A673 (cell line): ENCODE measurements at regions of chr20 and their contacts with region 1.

Region 1: DNA sequence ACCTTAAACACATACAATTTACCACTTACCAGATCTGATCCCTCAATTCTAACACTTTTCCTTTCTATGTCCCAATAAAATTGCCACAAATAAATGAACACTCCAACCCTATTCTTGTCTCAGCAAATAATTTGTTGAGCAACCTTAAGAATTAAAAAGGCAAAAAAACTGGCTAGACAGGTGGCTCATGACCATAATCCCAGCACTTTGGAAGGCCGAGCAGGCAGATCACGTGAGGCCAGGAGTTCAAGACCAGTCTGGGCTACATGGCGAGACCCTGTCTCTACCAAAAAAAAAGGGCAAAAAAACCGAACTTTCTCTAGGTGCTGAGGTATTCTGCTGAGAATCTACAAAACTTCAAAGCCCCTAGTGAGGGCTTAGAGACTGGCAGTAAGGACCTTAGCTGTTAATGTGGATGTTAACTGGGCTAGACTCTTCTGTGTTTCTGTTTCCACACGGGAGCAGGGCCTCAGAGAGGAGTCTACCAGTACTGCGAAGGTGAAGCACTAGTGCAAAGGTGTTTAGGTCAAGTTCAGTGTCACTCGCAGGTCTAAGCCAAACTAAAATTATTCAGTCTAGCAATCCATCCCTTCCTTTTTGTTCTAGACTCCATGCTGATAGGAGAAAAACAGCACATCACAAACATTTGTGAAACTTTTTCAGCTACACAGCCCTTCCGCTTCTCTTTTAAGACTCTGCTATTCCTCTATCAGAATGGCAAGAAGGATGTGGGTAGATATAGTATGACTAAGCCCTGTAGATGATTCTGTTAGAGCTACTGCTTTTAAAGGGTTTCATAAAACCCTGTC is 2.6 kb downstream of the FASTKD5 start:
- DNase-seq: no peak
- H3K4me3 ChIP-seq: no peak overlapping the region
- H3K27ac ChIP-seq: no peak overlapping the region
- H3K4me1 ChIP-seq: no peaks in the 10 kb centered on the region
- H3K27me3 ChIP-seq: no peaks in the 10 kb centered on the region
- CTCF ChIP-seq: no peak

Region 2: DNA sequence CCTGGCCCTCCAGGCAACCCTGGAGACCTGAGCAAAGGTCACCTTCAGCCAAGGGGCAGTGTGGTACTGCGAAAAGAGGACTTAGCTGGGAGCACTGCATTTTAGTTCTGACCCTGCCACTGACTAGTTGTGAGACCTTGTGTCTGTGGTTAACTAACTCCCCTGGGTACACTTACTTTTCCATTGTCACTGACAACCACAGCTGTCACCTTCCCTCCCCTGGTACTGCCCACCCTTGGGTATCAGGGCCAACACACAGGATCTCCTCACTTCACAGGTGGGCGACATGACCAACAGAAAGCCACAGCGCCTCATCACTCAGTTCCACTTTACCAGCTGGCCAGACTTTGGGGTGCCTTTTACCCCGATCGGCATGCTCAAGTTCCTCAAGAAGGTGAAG is 135.2 kb before region 1 on chr20:
- CTCF ChIA-PET with region 1: no interaction called
- POLR2A ChIA-PET with region 1: no interaction called
- intact Hi-C with region 1: no loop called
- DNase-seq: no peak
- H3K4me3 ChIP-seq: no peak overlapping the region
- H3K27ac ChIP-seq: no peak overlapping the region
- H3K4me1 ChIP-seq: no peaks in the 10 kb centered on the region
- H3K27me3 ChIP-seq: no peaks in the 10 kb centered on the region
- CTCF ChIP-seq: no peak

Region 3: DNA sequence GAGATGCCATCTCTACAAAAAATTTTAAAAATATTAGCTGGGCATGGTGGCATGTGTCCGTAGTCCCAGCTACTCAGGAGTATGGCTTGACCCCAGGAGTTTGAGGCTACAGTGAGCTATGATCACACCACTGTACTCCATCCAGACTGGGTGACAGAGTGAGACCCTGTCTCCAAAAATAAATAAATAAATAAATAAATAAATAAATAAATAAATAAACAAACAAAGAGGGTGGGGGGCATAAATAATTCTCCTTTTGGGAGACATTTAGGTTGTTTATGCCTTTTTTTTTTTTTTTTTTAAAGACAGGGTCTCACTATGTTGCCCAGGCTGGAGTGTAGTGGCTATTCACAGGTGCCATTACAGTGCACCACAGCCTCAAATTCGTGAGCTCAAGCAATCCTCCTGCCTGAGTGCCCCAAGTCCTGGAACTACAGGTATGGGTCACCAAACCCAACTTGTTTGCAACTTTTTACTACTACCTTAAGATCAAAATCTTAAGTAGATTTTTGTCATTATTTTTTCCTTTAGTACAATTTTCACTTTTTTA is 26.9 kb before region 1 on chr20:
- CTCF ChIA-PET with region 1: no interaction called
- POLR2A ChIA-PET with region 1: interaction called, 28 read pairs
- intact Hi-C with region 1: no loop called
- DNase-seq: no peak
- H3K4me3 ChIP-seq: no peak overlapping the region
- H3K27ac ChIP-seq: no peak overlapping the region
- H3K4me1 ChIP-seq: no peaks in the 10 kb centered on the region
- H3K27me3 ChIP-seq: no peaks in the 10 kb centered on the region
- CTCF ChIP-seq: no peak